Cardiac septum (tissue), 1 donor: ENCODE measurements at regions of chr14 and their contacts with region 1.

Region 1: GRCh38 chr14:80850197-80850814 is 91.2 kb downstream of the CEP128 start:
- DNase-seq: no peak

Region 2: DNA sequence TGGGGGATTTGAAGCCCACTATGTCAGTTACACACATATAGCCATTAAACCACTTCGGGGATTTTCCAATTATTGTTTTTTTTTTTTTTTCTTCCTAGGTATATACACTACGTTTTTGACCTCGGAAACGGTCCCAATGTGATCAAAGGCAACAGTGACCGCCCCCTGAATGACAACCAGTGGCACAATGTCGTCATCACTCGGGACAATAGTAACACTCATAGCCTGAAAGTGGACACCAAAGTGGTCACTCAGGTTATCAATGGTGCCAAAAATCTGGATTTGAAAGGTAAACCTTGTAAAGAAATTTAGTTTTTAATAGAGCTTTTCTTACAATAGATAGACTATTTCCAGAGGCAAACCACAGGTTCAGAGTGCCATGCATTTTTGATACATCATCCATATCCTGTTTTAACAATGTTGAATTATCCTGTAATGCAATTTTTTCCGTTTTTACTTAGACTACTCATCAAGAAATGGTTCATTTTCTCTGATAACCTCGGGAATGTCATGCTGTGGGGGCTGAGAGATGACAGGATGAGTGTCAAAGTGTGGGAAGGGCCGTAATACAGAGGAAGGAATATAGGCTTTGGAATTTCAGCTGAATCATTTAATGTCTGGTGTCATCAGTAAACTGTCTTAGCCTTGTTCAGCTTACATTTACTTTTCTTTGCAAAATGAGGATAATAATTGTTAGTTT is 1883.0 kb before region 1 on chr14:
- intact Hi-C with region 1: loop called (anchors 5 kb)
- DNase-seq: no peak

Region 3: GRCh38 chr14:80055667-80056496 is 794.4 kb before region 1 on chr14:
- intact Hi-C with region 1: loop called (anchors 10 kb)
- DNase-seq: no peak

Region 4: GRCh38 chr14:80867091-80867490 is 16.8 kb after region 1 on chr14:
- intact Hi-C with region 1: no loop called
- DNase-seq: no peak